T-cell (primary cell): ENCODE measurements at regions of chr9 and their contacts with region 1.

Region 1: DNA sequence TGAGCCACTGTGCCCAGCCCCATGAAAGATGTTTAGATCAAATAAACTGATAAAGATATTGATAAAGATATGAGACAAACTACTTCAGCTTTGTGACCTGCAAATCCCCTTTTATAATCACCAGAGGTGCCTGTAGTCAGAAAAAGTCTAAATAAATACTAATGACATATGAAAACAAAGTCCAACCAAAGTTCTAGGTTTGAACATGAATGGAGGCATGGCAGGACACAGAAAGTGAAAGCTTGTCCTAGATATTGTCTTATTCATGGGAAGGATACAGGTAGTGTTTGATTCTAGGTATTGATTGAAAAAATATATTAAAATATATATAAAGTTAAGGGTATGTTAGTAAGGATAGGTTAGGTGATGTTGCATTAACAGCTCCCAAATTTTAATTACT is 24.6 kb upstream of the PSAT1 start:
- DNase-seq: no peak
- ATAC-seq: no peak
- H3K4me3 ChIP-seq: no peak overlapping the region
- H3K4me3 Mint-ChIP-seq: no peak overlapping the region
- H3K27ac ChIP-seq: no peak overlapping the region
- H3K27ac Mint-ChIP-seq: no peak overlapping the region
- H3K4me1 ChIP-seq: no peaks in the 10 kb centered on the region
- H3K4me1 Mint-ChIP-seq: no peaks in the 10 kb centered on the region
- H3K27me3 ChIP-seq: no peaks in the 10 kb centered on the region
- H3K27me3 Mint-ChIP-seq: no peaks in the 10 kb centered on the region

Region 2: DNA sequence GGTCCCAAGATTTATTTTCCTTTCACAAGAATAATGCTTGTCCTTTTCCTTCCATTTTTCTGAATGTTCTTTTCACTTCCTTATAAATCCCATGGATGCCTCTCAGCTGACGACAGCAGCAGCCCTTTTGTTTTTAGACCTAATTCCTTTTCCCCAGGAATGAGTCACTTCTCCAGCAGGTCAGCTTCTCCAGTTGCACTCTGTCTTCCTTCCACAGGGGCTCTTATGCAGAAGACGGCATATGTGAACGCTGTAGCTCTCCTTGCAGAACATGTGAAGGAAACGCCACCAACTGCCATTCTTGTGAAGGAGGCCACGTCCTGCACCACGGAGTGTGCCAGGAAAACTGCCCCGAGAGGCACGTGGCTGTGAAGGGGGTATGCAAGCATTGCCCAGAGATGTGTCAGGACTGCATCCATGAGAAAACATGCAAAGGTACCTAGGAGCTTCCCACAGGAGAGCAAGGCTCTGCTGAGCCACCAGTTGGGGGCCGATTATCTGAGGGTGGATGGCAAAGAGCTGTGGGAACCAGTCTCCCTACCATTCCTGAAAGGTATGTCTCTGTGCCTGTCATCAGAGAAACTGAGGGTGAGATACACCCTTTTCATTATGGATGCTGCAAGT is 1951.0 kb before region 1 on chr9:
- CTCF ChIA-PET with region 1: interaction called in 1 of 2 experiments, 12 read pairs
- POLR2A ChIA-PET with region 1: no interaction called
- DNase-seq: no peak
- ATAC-seq: no peak
- H3K4me3 ChIP-seq: no peak overlapping the region
- H3K4me3 Mint-ChIP-seq: no peak overlapping the region
- H3K27ac ChIP-seq: no peak overlapping the region
- H3K27ac Mint-ChIP-seq: no peak overlapping the region
- H3K4me1 ChIP-seq: no peaks in the 10 kb centered on the region
- H3K4me1 Mint-ChIP-seq: no peaks in the 10 kb centered on the region
- H3K27me3 ChIP-seq: peaks cover 0 to 10% of the 10 kb centered on the region in 2 experiments
- H3K27me3 Mint-ChIP-seq: peaks cover 8 to 10% of the 10 kb centered on the region in 2 donors

Region 3: DNA sequence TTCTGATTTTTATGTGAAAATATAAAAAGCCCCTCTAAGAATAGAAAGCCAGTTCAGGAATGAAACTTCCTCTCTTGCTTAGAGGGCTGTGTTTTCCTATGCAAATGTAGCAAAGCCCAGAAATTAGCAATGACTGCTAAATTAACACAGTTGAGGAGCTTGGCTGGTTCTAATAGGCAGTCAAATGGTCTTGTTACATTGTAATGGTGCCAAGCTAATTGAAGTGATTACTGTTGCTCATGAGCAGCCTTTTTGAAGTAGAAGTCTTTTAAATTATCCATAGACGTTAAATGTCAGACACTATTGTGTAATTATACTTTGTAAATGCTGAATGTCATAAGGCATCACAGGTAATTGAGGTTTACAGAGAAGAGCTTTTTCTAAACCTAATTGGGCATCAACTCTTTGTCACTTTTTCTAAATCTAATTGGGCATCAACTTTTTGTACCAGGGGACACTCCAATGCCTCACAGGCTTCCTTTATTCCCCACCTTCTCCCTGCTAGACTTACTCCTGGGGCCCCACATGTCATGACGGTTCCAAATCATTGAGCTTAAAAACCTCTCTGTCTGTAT is 253.8 kb after region 1 on chr9:
- CTCF ChIA-PET with region 1: no interaction called
- POLR2A ChIA-PET with region 1: no interaction called
- DNase-seq: no peak
- ATAC-seq: no peak
- H3K4me3 ChIP-seq: no peak overlapping the region
- H3K4me3 Mint-ChIP-seq: no peak overlapping the region
- H3K27ac ChIP-seq: no peak overlapping the region
- H3K27ac Mint-ChIP-seq: no peak overlapping the region
- H3K4me1 ChIP-seq: no peaks in the 10 kb centered on the region
- H3K4me1 Mint-ChIP-seq: no peaks in the 10 kb centered on the region
- H3K27me3 ChIP-seq: no peaks in the 10 kb centered on the region
- H3K27me3 Mint-ChIP-seq: no peaks in the 10 kb centered on the region